Left lung (tissue), 14 donors: ENCODE measurements at regions of chr4 and their contacts with region 1.

Region 1: DNA sequence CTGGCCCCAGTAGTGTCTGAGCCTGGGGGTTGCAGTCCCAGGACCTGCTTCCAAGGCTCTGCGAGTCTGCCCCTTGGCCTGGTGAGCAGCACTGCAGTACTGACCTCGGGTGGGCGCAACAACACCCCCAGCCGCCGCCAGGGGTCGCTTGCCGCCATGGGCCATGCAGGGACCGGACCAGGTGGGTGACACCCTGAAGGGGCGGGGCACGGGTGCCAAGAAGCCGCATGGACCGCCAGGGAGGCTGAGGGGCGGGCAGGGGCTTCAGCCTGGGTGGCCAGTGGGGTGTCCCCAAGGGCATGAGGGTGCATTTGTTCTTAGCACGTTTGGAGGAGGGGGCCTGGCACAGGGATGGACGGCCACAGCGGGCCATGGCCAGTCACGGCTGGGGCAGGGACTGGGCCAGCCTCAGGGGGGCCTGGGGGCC is 25.0 kb downstream of the TACC3 start:
- DNase-seq: peak in 2 of 4 donors; percentile 79 to 93
- ATAC-seq: peak; percentile 67
- H3K4me3 ChIP-seq: no peak overlapping the region
- H3K27ac ChIP-seq: no peak overlapping the region
- H3K4me1 ChIP-seq: peaks cover 0 to 5% of the 10 kb centered on the region in 2 donors
- H3K27me3 ChIP-seq: peaks cover 0 to 19% of the 10 kb centered on the region in 2 donors
- CTCF ChIP-seq: peak; percentile 69 to 79

Region 2: DNA sequence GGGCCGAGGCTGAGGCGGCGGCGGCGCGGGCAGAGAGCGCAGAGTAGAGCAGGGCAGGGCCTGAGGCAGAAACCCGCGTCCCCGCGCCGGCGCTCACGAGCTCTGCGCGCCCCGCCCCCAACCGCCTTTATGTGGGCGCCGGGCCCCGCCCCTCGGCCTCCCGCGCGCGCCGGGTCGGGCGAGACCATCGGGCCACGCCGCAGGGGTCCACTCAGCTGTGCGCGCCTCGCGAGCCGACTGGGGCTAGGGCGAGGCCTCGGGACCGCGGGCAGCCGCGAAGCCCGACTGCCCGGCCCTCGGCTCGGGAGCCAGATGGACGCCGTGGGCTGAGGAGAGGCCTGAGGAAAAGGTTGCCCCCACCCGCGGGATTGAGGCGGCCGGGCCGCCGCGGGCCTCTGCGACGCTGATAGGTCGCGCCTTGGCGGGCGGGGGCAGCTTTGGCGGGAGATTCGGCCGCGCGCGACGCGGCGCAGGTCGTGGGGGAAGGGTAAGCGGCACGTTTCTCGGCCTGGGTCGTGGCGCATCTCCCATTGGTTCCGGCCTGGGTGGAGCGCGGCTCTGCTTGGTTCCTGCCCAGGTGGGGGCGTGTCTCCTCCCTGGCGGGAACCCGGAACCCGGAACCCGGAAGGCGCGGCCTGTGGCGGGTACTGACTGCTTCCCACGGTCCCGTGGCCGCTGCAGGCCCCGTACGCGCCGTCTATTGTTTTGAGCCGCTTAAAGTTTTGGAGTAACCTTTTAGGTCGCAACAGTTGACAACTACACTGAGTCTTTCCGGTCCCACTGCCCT is 33.9 kb before region 1 on chr4 and contains the start of gene SLBP:
- intact Hi-C with region 1: no loop called
- DNase-seq: peak; percentile 89 to 99 (median 96)
- ATAC-seq: peak; percentile 94
- H3K4me3 ChIP-seq: peak within 1 kb of the TSS; percentile 83 to 89
- H3K27ac ChIP-seq: peak within 1 kb of the TSS; percentile 99
- H3K4me1 ChIP-seq: peaks cover 12 to 63% of the 10 kb centered on the region in 2 donors
- H3K27me3 ChIP-seq: no peaks in the 10 kb centered on the region
- CTCF ChIP-seq: no peak
- polyA plus RNA-seq, gene SLBP: 57.2 to 73.0 (median 62.0) TPM

Region 3: GRCh38 chr4:1809754-1810511 is 63.7 kb after region 1 on chr4:
- intact Hi-C with region 1: loop called in 1 of 2 experiments (anchors 2 kb)
- DNase-seq: peak; percentile 48 to 91 (median 75)
- ATAC-seq: peak; percentile 83
- H3K4me3 ChIP-seq: no peak overlapping the region
- H3K27ac ChIP-seq: no peak overlapping the region
- H3K4me1 ChIP-seq: no peaks in the 10 kb centered on the region
- H3K27me3 ChIP-seq: no peaks in the 10 kb centered on the region
- CTCF ChIP-seq: peak; percentile 78 to 87

Region 4: GRCh38 chr4:1899149-1900086 is 153.1 kb after region 1 on chr4:
- intact Hi-C with region 1: loop called in 1 of 2 experiments (anchors 10 kb)
- DNase-seq: peak; percentile 67 to 88 (median 73)
- ATAC-seq: peak; percentile 84
- H3K4me3 ChIP-seq: no peak overlapping the region
- H3K27ac ChIP-seq: no peak overlapping the region
- H3K4me1 ChIP-seq: no peaks in the 10 kb centered on the region
- H3K27me3 ChIP-seq: no peaks in the 10 kb centered on the region
- CTCF ChIP-seq: peak; percentile 78 to 92